HCT116 (cell line): ENCODE measurements at regions of chr16 and their contacts with region 1.

Region 1: GRCh38 chr16:48164907-48165726 is 9.3 kb upstream of the ABCC12 start:
- DNase-seq: peak; percentile 59
- ATAC-seq: peak; percentile 97
- H3K4me3 ChIP-seq: no peak overlapping the region
- H3K27ac ChIP-seq: no peak overlapping the region
- H3K4me1 ChIP-seq: peaks cover 0 to 7% of the 10 kb centered on the region in 2 experiments; a peak in 2 of 4 replicates
- H3K27me3 ChIP-seq: no peaks in the 10 kb centered on the region
- CTCF ChIP-seq: peak; percentile 76 to 90 (median 86)
- POLR2A ChIP-seq: no peak
- RAD21 ChIP-seq: peak; percentile 96

Region 2: DNA sequence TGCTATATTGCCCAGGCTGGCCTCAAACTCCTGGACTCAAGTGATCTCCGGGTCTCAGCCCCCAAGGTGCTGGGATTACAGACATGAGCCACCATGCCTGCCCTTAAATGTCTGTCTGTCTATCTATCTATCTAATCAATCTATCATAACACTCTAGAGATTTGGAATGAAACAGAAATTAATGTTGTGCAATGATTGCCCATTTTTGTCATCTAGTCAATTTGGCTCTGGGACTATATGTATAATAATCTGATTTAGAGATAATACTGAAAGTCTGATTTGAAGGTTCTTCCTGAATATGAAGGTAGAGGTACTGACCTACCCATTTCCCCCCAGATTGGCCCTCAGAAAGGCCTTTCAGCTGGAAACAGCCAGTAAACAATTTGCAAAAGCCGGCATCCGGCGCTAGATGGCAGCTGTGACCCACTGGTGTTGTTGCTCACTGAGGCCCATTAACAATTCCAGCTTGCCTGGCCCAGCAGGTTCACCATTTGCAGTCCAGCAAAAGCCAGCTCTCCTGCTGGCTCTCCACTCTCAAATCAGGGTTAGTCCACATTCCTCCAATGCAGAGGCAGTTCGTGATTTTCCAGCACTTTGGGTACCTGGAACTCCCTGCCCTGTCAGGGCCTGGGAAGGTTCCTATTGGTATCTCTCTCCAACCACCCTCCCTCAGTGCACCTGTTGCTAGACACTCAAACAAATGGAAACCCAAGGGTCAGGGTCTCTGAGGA is 1311.2 kb before region 1 on chr16:
- CTCF ChIA-PET with region 1: interaction called, 5 read pairs
- POLR2A ChIA-PET with region 1: no interaction called
- RAD21 ChIA-PET with region 1: interaction called in 1 of 2 experiments, 3 read pairs
- intact Hi-C with region 1: loop called (anchors 10 kb)
- DNase-seq: peak; percentile 50
- ATAC-seq: peak; percentile 84
- H3K4me3 ChIP-seq: no peak overlapping the region
- H3K27ac ChIP-seq: no peak overlapping the region
- H3K4me1 ChIP-seq: peaks cover 1 to 11% of the 10 kb centered on the region in 2 experiments; a peak in 3 of 4 replicates
- H3K27me3 ChIP-seq: no peaks in the 10 kb centered on the region
- CTCF ChIP-seq: peak; percentile 80 to 81 (median 81)
- POLR2A ChIP-seq: no peak
- RAD21 ChIP-seq: peak; percentile 94

Region 3: DNA sequence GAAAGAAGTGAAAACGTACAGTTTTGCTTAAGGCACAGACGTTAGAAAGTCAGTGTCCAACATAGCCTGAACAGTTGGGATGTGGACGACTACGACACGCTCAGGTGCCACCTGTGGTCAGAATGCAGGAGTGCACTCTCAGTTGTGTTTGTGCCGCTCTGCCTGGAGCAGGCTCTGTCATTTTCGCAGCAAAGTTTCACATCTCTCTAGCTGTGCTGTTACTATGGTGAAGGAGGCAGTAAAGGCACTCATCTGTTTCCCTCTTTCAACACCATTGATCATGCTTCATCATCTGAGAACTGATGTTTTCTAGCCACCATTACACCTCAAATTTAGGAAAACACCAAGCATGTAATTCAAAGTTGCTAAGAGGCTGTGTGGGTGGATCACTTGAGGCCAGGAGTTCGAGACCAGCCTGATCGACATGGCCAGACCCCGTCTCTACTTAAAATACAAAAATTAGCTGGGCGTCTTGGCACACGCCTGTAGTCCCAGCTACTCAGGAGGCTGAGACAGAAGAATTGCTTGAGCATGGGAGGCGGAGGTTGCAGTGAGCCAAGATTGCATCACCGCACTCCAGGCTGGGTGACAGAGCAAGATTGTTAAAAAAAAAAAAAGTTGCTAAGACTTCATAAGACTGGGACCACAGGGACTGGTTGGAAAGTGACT is 1146.8 kb before region 1 on chr16:
- CTCF ChIA-PET with region 1: interaction called, 11 read pairs
- POLR2A ChIA-PET with region 1: no interaction called
- RAD21 ChIA-PET with region 1: no interaction called
- intact Hi-C with region 1: no loop called
- DNase-seq: peak; percentile 71
- ATAC-seq: peak; percentile 99
- H3K4me3 ChIP-seq: no peak overlapping the region
- H3K27ac ChIP-seq: no peak overlapping the region
- H3K4me1 ChIP-seq: peaks cover 5 to 11% of the 10 kb centered on the region in 2 experiments
- H3K27me3 ChIP-seq: no peaks in the 10 kb centered on the region
- CTCF ChIP-seq: peak; percentile 52 to 64 (median 61); a peak in 5 of 6 replicates
- POLR2A ChIP-seq: no peak
- RAD21 ChIP-seq: peak; percentile 65

Region 4: DNA sequence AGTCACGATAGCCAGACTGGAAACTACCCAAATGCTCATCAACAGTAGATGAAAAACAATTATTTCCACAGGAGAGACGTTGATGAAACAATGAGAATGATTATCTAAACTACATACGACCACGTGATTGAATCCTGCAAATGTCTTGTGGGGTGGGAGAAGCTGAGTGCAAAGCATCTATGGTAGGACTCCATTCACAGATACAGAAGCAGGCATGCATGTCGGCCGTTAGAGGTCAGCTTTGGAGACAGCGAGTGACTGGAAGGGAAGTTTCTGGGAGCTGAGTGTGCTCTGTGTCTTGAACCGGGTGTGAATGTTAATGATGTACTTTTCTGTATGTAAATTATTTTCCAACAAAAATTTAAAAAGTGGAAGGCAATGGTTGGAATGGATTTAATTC is 1120.1 kb before region 1 on chr16:
- CTCF ChIA-PET with region 1: interaction called, 11 read pairs
- POLR2A ChIA-PET with region 1: no interaction called
- RAD21 ChIA-PET with region 1: no interaction called
- intact Hi-C with region 1: no loop called
- DNase-seq: no peak
- ATAC-seq: no peak
- H3K4me3 ChIP-seq: no peak overlapping the region
- H3K27ac ChIP-seq: no peak overlapping the region
- H3K4me1 ChIP-seq: no peaks in the 10 kb centered on the region
- H3K27me3 ChIP-seq: no peaks in the 10 kb centered on the region
- CTCF ChIP-seq: no peak
- POLR2A ChIP-seq: no peak
- RAD21 ChIP-seq: no peak

Region 5: GRCh38 chr16:48123104-48123788 is 41.9 kb before region 1 on chr16:
- CTCF ChIA-PET with region 1: interaction called, 12 read pairs
- POLR2A ChIA-PET with region 1: no interaction called
- RAD21 ChIA-PET with region 1: no interaction called
- intact Hi-C with region 1: no loop called
- DNase-seq: peak; percentile 85
- ATAC-seq: peak; percentile 95
- H3K4me3 ChIP-seq: peak overlapping the region in 1 of 2 experiments; percentile 8; a peak in 1 of 4 replicates
- H3K27ac ChIP-seq: peak overlapping the region; percentile 8; the same call in 1 of the 2 replicates
- H3K4me1 ChIP-seq: peaks cover 10 to 32% of the 10 kb centered on the region in 2 experiments
- H3K27me3 ChIP-seq: no peaks in the 10 kb centered on the region
- CTCF ChIP-seq: no peak
- POLR2A ChIP-seq: no peak
- RAD21 ChIP-seq: no peak

Region 6: GRCh38 chr16:48629531-48629930 is 464.4 kb after region 1 on chr16:
- CTCF ChIA-PET with region 1: interaction called, 10 read pairs
- POLR2A ChIA-PET with region 1: no interaction called
- RAD21 ChIA-PET with region 1: no interaction called
- intact Hi-C with region 1: no loop called
- DNase-seq: no peak
- ATAC-seq: no peak
- H3K4me3 ChIP-seq: no peak overlapping the region
- H3K27ac ChIP-seq: no peak overlapping the region
- H3K4me1 ChIP-seq: peaks cover 0 to 5% of the 10 kb centered on the region in 2 experiments; a peak in 1 of 4 replicates
- H3K27me3 ChIP-seq: no peaks in the 10 kb centered on the region
- CTCF ChIP-seq: no peak
- POLR2A ChIP-seq: no peak
- RAD21 ChIP-seq: no peak